Endothelial cell of umbilical vein (primary cell): ENCODE measurements at regions of chr1 and their contacts with region 1.

Region 1: GRCh38 chr1:156728597-156729462 is at the start of gene ISG20L2:
- DNase-seq: peak; percentile 96
- H3K4me3 ChIP-seq: peak within 1 kb of the TSS; percentile 56 to 94 (median 79)
- H3K27ac ChIP-seq: peak within 1 kb of the TSS; percentile 83
- H3K4me1 ChIP-seq: peaks cover 32% of the 10 kb centered on the region
- H3K27me3 ChIP-seq: no peaks in the 10 kb centered on the region
- CTCF ChIP-seq: no peak
- POLR2A ChIP-seq: peak; percentile 75
- total RNA-seq, gene ISG20L2: 32.1 and 35.3 TPM in 2 replicates

Region 2: GRCh38 chr1:156625436-156626078 is 103.3 kb before region 1 on chr1:
- CTCF ChIA-PET with region 1: interaction called, 28 read pairs
- POLR2A ChIA-PET with region 1: no interaction called
- dilution Hi-C with region 1: no loop called
- intact Hi-C with region 1: loop called (anchors 1 kb)
- DNase-seq: peak; percentile 47
- H3K4me3 ChIP-seq: no peak overlapping the region
- H3K27ac ChIP-seq: no peak overlapping the region
- H3K4me1 ChIP-seq: peaks cover 10% of the 10 kb centered on the region
- H3K27me3 ChIP-seq: peaks cover 36% of the 10 kb centered on the region in 2 experiments
- CTCF ChIP-seq: peak; percentile 69 to 90
- POLR2A ChIP-seq: no peak

Region 3: DNA sequence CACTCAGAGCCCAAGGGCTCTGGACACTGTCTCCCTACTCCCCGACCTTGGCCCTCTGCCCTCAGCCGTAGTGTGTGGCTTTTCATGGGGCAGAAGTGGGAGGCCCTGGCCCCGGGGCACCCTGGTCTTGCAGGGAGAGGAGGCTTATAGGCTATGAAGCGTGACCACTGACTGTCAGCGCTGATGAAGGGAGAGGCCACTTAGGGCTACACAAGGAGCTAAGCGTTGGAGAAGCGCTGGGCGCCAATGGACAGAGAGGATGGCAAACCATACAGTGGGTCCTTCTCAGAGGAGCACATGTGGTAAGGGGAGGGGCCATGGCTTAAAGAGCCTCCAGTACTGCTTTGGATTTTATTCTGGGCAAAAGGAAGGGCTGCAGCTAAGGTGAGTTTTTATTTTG is 31.3 kb before region 1 on chr1:
- CTCF ChIA-PET with region 1: interaction called, 546 read pairs
- POLR2A ChIA-PET with region 1: no interaction called
- dilution Hi-C with region 1: no loop called
- intact Hi-C with region 1: no loop called
- DNase-seq: no peak
- H3K4me3 ChIP-seq: no peak overlapping the region
- H3K27ac ChIP-seq: no peak overlapping the region
- H3K4me1 ChIP-seq: no peaks in the 10 kb centered on the region
- H3K27me3 ChIP-seq: peaks cover 4 to 6% of the 10 kb centered on the region in 2 experiments
- CTCF ChIP-seq: no peak
- POLR2A ChIP-seq: no peak

Region 4: DNA sequence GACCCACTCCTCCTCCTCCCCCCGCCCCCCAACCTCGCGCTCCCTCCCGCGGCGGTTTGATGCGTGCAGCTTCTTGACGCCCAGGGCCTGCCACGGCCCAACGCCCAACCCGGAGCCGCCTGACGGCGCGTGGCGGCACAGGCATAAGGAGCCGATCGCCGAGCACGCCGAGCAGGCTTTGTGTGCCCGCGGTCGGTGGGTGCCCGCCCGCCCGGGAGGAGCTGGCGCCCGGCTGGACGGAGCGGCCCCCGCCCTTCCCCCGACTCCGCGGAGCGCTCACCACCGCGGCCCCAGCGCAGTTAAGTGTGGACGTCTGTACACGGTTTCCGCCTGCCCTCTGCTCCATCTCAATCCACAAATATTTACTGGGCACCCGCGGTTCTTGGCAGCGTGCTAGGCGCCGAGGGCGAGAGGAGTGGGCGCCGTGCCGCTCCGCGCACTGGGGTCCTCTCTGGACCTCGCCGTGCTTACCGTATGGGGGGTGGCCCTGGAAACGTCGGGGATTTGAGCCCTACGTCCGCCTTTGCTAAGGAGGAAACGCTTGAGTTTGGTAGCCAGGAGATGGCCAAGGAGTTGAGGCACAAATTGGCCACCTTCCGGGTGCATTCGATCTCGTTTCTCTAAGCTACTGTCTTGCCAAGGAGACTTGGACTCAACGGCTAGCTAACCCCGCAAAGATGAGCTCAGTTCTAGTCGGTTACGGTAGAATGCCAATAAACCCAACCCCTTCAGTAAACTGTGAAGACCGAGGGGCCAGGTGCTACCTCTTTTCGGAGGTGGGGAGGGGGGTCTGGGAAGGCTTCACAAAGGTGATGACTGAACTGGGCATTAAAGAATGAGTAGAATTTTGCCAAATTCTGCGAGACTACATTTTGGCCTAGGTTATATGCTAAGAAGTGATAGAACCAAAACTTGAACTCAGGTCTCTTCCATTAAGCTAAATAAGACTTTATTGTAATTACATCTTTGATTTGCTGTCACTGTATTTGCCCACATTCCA is 23.2 kb after region 1 on chr1:
- CTCF ChIA-PET with region 1: interaction called, 49 read pairs
- POLR2A ChIA-PET with region 1: interaction called, 8 read pairs
- dilution Hi-C with region 1: no loop called
- intact Hi-C with region 1: loop called (anchors 1 kb)
- DNase-seq: peak; percentile 97
- H3K4me3 ChIP-seq: peak overlapping the region; percentile 30 to 94 (median 73)
- H3K27ac ChIP-seq: peak overlapping the region; percentile 60
- H3K4me1 ChIP-seq: peaks cover 42% of the 10 kb centered on the region
- H3K27me3 ChIP-seq: no peaks in the 10 kb centered on the region
- CTCF ChIP-seq: peak in 1 of 2 donors; percentile 29
- POLR2A ChIP-seq: peak; percentile 72

Region 5: GRCh38 chr1:156789621-156790318 is 60.9 kb after region 1 on chr1:
- CTCF ChIA-PET with region 1: interaction called, 45 read pairs
- POLR2A ChIA-PET with region 1: no interaction called
- dilution Hi-C with region 1: no loop called
- intact Hi-C with region 1: no loop called
- DNase-seq: no peak
- H3K4me3 ChIP-seq: no peak overlapping the region
- H3K27ac ChIP-seq: no peak overlapping the region
- H3K4me1 ChIP-seq: no peaks in the 10 kb centered on the region
- H3K27me3 ChIP-seq: no peaks in the 10 kb centered on the region
- CTCF ChIP-seq: no peak
- POLR2A ChIP-seq: no peak

Region 6: DNA sequence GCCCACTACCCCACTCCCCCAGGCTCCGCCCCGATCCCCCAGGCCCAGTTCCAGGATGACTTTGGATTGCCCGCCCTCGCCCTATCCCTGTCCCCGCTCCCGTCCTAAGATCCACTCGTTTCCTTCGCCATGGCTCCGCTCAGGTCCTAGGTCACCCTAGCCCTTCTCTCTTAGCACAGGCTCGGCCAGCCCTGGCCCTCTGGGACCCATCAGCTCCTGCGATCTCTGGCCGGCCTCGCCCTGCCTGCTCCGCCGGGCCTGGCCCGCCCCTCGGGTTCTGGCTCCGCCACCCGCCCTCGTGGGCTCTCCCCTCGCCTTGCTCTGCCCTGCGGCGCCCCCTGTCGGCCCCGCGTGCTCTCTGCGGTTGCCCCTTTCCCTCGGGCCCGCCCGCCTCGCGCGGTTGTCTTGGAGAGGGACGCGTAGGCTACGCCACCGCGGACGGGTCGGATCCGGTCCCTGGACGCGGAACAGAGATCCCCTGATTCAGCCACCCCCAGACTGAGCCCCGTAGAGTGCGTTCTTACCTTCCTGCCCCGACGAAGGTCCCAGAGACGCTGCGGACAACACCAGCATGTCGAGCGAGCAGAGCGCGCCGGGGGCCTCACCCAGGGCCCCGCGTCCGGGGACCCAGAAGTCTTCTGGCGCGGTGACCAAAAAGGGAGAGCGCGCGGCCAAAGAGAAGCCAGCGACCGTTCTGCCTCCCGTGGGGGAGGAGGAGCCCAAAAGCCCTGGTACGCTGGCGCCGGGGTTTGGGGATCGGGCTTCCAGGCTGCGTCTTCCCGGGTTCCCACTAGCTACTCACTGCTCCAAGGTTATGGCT is 191.6 kb after region 1 on chr1 and contains the start of gene LRRC71:
- CTCF ChIA-PET with region 1: interaction called, 18 read pairs
- POLR2A ChIA-PET with region 1: no interaction called
- dilution Hi-C with region 1: no loop called
- intact Hi-C with region 1: no loop called
- DNase-seq: peak; percentile 77
- H3K4me3 ChIP-seq: no peak within 1 kb of the TSS
- H3K27ac ChIP-seq: no peak within 1 kb of the TSS
- H3K4me1 ChIP-seq: no peaks in the 10 kb centered on the region
- H3K27me3 ChIP-seq: peaks cover 26 to 32% of the 10 kb centered on the region in 2 experiments
- CTCF ChIP-seq: peak; percentile 97 to 98
- POLR2A ChIP-seq: peak; percentile 71
- total RNA-seq, gene LRRC71: 0.66 and 1.2 TPM in 2 replicates